Left colon (tissue), 2 donors: ENCODE measurements at regions of chr3 and their contacts with region 1.

Region 1: DNA sequence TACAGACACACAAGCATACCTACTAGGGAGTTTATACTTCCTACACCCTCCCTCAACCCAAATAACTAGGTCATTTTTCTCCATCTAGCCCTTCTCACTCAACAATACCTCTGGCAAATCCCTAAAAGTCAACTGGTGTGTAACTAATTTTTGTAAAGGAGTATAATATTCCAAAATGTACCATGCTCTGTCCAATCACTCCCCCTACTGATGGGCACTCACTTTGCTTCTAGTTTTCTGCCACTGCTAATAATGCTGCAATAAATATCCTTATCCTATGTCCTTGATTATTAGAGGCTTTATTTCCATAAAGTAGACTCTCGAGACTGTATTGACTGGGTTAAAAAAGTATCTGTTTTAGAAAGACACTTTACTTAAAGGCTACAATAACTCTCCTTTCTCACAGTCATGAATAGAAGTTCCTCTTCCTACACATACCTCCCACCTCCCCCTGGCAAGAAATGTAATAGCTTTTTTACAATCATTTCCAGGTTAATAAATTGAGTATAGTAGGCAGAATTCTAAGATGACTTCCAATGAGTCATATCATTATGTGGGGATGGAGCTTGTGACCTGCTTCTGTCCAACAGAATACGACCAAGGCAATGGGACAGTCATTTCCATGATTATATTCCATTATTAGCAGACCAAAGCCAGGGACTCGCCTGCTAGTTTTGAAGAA is 30.0 kb downstream of the SHQ1 start:
- DNase-seq: no peak
- ATAC-seq: no peak

Region 2: DNA sequence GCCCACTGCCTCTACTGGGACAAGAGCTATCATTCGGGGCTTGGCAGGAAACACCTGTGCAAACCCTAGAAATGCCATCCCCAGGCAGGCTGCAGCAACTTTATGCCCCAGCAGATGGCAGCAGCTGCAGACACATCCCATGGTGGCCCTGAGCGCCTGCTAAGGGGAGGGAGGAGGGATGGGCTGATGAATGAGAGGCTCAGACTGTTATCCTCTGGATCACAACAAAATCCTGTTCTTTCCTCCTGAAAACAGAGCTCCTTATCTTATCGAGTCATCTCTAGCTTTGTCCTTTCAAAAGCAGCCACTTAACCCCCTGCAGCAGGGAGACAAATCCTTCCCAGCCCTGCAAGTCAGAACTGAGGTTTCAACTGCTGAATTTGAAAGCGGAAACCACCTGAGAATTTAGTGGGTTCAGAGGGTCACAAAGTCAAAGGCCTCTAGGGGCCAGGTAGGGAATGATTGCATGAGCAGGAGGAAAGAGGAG is 942.7 kb before region 1 on chr3:
- intact Hi-C with region 1: loop called in 1 of 2 experiments (anchors 5 kb)
- DNase-seq: peak; percentile 60 to 83
- ATAC-seq: peak; percentile 95

Region 3: GRCh38 chr3:71955240-71956068 is 862.8 kb before region 1 on chr3:
- intact Hi-C with region 1: loop called in 1 of 2 experiments (anchors 10 kb)
- DNase-seq: peak; percentile 55 to 68
- ATAC-seq: peak; percentile 57

Region 4: DNA sequence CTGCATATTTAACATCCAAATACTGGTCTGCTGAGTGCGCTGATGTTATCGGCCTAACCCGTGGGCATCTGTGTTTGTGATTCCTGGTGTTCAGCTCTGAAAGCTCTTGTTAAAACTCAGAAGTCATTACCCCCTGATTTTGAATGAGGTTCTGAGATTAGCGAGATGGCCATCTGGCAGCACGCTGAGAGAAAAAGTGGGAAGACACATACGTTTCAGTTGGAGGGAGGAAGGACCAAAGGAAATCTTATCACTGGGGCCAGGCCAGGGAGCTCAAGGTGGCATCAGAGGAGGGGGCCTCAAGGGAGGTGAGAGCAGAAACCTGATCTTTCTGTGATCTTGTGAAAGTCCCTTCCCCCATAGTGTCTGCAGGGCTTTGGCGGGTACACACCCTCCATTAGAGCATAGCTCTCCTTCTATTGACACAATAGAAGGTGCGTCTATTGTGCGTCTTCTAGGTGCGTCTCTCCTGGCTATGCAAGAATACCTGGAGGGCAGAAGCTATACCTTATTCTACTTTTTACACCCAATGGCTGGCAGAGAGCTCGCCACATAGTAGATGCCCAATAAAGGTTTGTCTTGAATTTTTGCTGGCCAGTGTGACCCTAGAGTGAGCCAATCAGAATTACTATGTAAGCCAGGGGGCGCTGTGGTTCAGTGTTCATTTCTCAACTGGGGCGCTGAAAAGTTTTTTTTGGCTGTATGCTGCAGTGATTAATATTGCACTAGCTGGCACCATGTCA is 152.4 kb before region 1 on chr3:
- intact Hi-C with region 1: loop called in 1 of 2 experiments (anchors 10 kb)
- DNase-seq: peak in 1 of 2 donors; percentile 79
- ATAC-seq: peak; percentile 83

Region 5: GRCh38 chr3:73080216-73080966 is 262.2 kb after region 1 on chr3:
- intact Hi-C with region 1: no loop called
- DNase-seq: no peak
- ATAC-seq: no peak